Endothelial cell of umbilical vein (primary cell): ENCODE measurements at regions of chr14 and their contacts with region 1.

Region 1: DNA sequence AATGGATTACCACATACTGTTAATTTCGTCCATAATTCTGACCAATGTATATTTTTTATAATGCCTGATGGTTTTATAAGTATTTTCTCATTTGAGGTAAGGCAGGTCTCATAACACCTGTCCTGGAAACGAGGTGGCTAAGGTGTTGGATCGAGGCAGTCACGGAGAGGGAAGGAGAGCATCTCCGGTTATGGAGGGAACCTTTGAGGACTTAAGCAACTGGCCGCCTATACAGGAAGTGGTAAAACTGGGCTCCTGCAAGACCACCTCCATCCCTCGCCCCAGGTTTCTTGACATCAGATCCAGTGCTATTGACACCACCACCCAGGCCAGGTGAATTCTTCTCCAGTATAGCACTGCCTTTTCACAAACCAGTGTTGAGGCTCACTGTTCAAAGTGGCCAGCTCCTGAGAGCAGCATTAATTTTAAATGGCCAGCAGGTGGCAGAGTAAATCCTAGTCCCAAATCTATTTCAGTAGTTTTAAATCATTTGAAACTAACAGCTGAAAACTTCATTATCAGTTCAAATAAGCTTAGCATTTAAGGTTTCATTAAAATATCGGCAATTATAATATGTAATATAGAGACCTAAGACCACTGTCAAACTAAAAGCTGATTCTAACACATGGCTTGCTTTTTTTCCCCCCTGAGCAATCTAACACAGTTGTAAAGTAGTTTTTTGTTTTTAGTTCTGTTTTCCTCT is 100.8 kb downstream of the PPM1A start:
- DNase-seq: peak; percentile 51
- H3K4me3 ChIP-seq: no peak overlapping the region
- H3K27ac ChIP-seq: no peak overlapping the region
- H3K4me1 ChIP-seq: peaks cover 4% of the 10 kb centered on the region
- H3K27me3 ChIP-seq: peaks cover 8 to 24% of the 10 kb centered on the region in 2 experiments
- CTCF ChIP-seq: peak; percentile 54 to 59
- POLR2A ChIP-seq: no peak

Region 2: GRCh38 chr14:60288279-60288678 is 61.5 kb before region 1 on chr14:
- CTCF ChIA-PET with region 1: no interaction called
- POLR2A ChIA-PET with region 1: no interaction called
- dilution Hi-C with region 1: no loop called
- intact Hi-C with region 1: no loop called
- DNase-seq: no peak
- H3K4me3 ChIP-seq: no peak overlapping the region
- H3K27ac ChIP-seq: no peak overlapping the region
- H3K4me1 ChIP-seq: no peaks in the 10 kb centered on the region
- H3K27me3 ChIP-seq: no peaks in the 10 kb centered on the region
- CTCF ChIP-seq: no peak
- POLR2A ChIP-seq: no peak

Region 3: GRCh38 chr14:60339571-60339970 is 10.2 kb before region 1 on chr14:
- CTCF ChIA-PET with region 1: interaction called, 11 read pairs
- POLR2A ChIA-PET with region 1: no interaction called
- dilution Hi-C with region 1: no loop called
- intact Hi-C with region 1: no loop called
- DNase-seq: no peak
- H3K4me3 ChIP-seq: no peak overlapping the region
- H3K27ac ChIP-seq: no peak overlapping the region
- H3K4me1 ChIP-seq: no peaks in the 10 kb centered on the region
- H3K27me3 ChIP-seq: peaks cover 12% of the 10 kb centered on the region in 2 experiments
- CTCF ChIP-seq: no peak
- POLR2A ChIP-seq: no peak

Region 4: DNA sequence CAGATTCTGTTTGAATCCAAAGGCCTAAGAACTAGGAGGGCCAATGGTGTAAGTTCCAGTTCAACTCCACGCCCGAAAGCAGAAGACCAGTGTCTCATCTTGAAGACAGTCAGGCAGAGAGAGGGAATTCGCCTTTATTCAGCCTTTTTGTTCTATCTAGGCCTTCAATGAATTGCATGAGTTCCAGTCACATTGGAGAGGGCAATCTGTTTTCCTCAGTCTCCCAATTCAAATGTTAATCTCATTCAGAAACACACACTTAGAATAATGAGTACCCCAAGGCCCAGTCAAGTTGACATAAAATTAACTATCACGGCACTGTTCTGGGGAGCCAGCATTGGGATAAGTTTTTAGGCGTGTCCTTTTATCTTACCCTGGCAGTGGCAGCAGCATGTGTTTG is 70.2 kb after region 1 on chr14:
- CTCF ChIA-PET with region 1: no interaction called
- POLR2A ChIA-PET with region 1: no interaction called
- dilution Hi-C with region 1: no loop called
- intact Hi-C with region 1: no loop called
- DNase-seq: no peak
- H3K4me3 ChIP-seq: no peak overlapping the region
- H3K27ac ChIP-seq: no peak overlapping the region
- H3K4me1 ChIP-seq: no peaks in the 10 kb centered on the region
- H3K27me3 ChIP-seq: no peaks in the 10 kb centered on the region
- CTCF ChIP-seq: no peak
- POLR2A ChIP-seq: no peak

Region 5: GRCh38 chr14:60485598-60486251 is 135.9 kb after region 1 on chr14 and contains the start of gene C14orf39:
- CTCF ChIA-PET with region 1: interaction called, 6 read pairs
- POLR2A ChIA-PET with region 1: no interaction called
- dilution Hi-C with region 1: no loop called
- intact Hi-C with region 1: loop called (anchors 2 kb)
- DNase-seq: peak; percentile 34
- H3K4me3 ChIP-seq: peak within 1 kb of the TSS; percentile 11 to 27 (median 25)
- H3K27ac ChIP-seq: no peak within 1 kb of the TSS
- H3K4me1 ChIP-seq: no peaks in the 10 kb centered on the region
- H3K27me3 ChIP-seq: peaks cover 25 to 69% of the 10 kb centered on the region in 2 experiments
- CTCF ChIP-seq: no peak
- POLR2A ChIP-seq: no peak
- total RNA-seq, gene C14orf39: not detected in 2 replicates

Region 6: DNA sequence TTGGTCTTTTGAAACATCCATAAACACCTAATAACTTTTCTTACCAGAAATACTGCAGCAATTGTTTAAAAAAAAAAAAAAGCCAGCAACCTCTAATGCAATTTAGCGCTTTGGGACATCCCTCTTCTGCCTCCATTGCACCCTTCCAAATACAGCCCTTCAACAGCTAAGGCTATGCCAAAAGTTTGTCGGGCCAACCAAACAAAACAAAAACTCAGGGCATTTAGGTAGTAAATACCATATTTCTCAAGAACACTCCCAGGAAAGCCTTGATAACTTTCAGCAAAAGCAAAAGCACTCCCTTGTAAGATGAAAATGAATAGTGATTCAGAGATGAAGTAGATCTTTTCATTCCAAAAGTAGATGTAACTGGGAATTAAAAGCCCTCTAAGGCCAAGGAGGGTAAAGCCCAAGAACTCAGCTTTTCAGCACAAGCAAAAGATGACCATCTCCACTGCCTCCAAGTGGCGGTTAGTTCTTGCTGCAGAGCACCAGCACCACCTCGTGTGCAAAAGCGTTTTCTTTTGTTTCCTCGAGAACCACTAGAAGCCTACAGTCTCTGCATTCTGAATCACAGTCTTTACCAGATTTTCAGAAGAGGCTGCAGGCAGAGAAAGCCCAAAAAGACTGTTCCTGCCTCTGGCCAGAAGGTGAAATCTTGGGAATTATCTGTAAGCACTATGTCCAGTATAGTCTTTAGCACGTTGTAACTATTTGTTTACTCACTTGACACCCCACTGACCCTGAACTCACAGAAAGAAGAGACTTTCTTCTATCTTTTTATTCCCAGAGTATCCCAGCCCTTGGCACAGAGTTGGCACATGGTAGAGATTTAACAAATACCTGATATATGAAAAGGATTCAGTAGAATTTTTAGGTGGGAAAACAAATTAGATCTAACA is 212.3 kb after region 1 on chr14:
- CTCF ChIA-PET with region 1: interaction called, 95 read pairs
- POLR2A ChIA-PET with region 1: interaction called, 3 read pairs
- dilution Hi-C with region 1: no loop called
- intact Hi-C with region 1: loop called (anchors 1 kb)
- DNase-seq: peak; percentile 59
- H3K4me3 ChIP-seq: no peak overlapping the region
- H3K27ac ChIP-seq: no peak overlapping the region
- H3K4me1 ChIP-seq: no peaks in the 10 kb centered on the region
- H3K27me3 ChIP-seq: peaks cover 0 to 8% of the 10 kb centered on the region in 2 experiments
- CTCF ChIP-seq: peak; percentile 45 to 70
- POLR2A ChIP-seq: no peak

Region 7: DNA sequence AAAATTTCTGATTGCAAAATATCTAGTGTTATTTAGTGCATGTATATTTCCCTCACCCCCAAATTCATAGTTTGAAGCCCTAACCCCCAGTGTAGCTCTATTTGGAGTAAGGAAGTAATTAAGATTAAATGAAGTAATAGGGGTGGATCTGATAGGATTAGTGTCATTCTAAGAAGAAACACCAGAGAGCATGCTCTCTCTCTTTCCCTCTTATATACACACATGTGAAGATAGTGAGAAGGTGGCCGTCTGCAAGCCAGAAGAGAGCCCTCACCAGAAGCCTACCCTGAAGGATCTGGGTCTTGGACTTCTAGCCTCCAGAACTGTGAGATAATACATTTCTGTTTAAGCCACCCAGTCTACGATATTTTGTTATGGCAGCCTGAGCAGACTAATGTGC is 811.0 kb after region 1 on chr14:
- CTCF ChIA-PET with region 1: no interaction called
- POLR2A ChIA-PET with region 1: no interaction called
- dilution Hi-C with region 1: no loop called
- intact Hi-C with region 1: no loop called
- DNase-seq: no peak
- H3K4me3 ChIP-seq: no peak overlapping the region
- H3K27ac ChIP-seq: no peak overlapping the region
- H3K4me1 ChIP-seq: no peaks in the 10 kb centered on the region
- H3K27me3 ChIP-seq: no peaks in the 10 kb centered on the region
- CTCF ChIP-seq: no peak
- POLR2A ChIP-seq: no peak

Region 8: DNA sequence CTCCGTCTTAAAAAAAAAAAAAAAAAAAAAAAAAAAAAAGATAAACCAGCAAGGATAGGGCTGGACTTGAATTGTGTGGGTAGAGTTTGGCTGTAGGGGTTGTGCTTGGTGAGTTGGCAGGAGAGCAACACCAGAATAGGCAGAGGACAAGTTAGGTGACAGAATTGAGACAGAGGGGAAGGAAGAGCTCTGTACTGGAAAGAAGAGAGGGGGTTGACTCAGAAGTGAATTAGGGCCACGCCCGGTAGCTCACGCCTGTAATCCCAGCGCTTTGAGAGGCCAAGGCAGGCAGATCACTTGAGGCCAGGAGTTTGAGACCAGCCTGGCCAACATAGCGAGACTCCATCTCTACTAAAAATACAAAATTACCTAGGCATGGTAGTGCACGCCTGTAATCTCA is 937.4 kb after region 1 on chr14:
- CTCF ChIA-PET with region 1: interaction called, 19 read pairs
- POLR2A ChIA-PET with region 1: no interaction called
- dilution Hi-C with region 1: no loop called
- intact Hi-C with region 1: no loop called
- DNase-seq: no peak
- H3K4me3 ChIP-seq: no peak overlapping the region
- H3K27ac ChIP-seq: no peak overlapping the region
- H3K4me1 ChIP-seq: peaks cover 10% of the 10 kb centered on the region
- H3K27me3 ChIP-seq: no peaks in the 10 kb centered on the region
- CTCF ChIP-seq: no peak
- POLR2A ChIP-seq: no peak